Heart left ventricle (tissue), 16 donors: ENCODE measurements at regions of chr7 and their contacts with region 1.

Region 1: GRCh38 chr7:40329601-40330153 is 194.9 kb downstream of the SUGCT start:
- DNase-seq: no peak
- ATAC-seq: peak in 2 of 4 donors; percentile 49 to 50
- H3K4me3 ChIP-seq: no peak overlapping the region
- H3K27ac ChIP-seq: no peak overlapping the region
- H3K4me1 ChIP-seq: peaks cover 0 to 4% (median 0%) of the 10 kb centered on the region in 12 donors
- H3K27me3 ChIP-seq: no peaks in the 10 kb centered on the region
- CTCF ChIP-seq: peak; percentile 64 to 89 (median 73)
- POLR2A ChIP-seq: no peak

Region 2: GRCh38 chr7:40276061-40276460 is 53.6 kb before region 1 on chr7:
- intact Hi-C with region 1: no loop called
- DNase-seq: no peak
- ATAC-seq: no peak
- H3K4me3 ChIP-seq: no peak overlapping the region
- H3K27ac ChIP-seq: no peak overlapping the region
- H3K4me1 ChIP-seq: no peaks in the 10 kb centered on the region
- H3K27me3 ChIP-seq: no peaks in the 10 kb centered on the region
- CTCF ChIP-seq: no peak
- POLR2A ChIP-seq: no peak

Region 3: GRCh38 chr7:40489844-40490602 is 160.3 kb after region 1 on chr7:
- intact Hi-C with region 1: no loop called
- DNase-seq: no peak
- ATAC-seq: no peak
- H3K4me3 ChIP-seq: no peak overlapping the region
- H3K27ac ChIP-seq: no peak overlapping the region
- H3K4me1 ChIP-seq: no peaks in the 10 kb centered on the region
- H3K27me3 ChIP-seq: no peaks in the 10 kb centered on the region
- CTCF ChIP-seq: no peak
- POLR2A ChIP-seq: no peak

Region 4: GRCh38 chr7:40604601-40605438 is 275.1 kb after region 1 on chr7:
- intact Hi-C with region 1: loop called in 9 of 10 experiments (anchors 2 to 10 kb)
- DNase-seq: peak; percentile 19 to 75 (median 54)
- ATAC-seq: peak; percentile 58 to 88 (median 86)
- H3K4me3 ChIP-seq: no peak overlapping the region
- H3K27ac ChIP-seq: no peak overlapping the region
- H3K4me1 ChIP-seq: peaks cover 0 to 6% (median 0%) of the 10 kb centered on the region in 12 donors
- H3K27me3 ChIP-seq: no peaks in the 10 kb centered on the region
- CTCF ChIP-seq: peak; percentile 40 to 71 (median 57)
- POLR2A ChIP-seq: no peak

Region 5: DNA sequence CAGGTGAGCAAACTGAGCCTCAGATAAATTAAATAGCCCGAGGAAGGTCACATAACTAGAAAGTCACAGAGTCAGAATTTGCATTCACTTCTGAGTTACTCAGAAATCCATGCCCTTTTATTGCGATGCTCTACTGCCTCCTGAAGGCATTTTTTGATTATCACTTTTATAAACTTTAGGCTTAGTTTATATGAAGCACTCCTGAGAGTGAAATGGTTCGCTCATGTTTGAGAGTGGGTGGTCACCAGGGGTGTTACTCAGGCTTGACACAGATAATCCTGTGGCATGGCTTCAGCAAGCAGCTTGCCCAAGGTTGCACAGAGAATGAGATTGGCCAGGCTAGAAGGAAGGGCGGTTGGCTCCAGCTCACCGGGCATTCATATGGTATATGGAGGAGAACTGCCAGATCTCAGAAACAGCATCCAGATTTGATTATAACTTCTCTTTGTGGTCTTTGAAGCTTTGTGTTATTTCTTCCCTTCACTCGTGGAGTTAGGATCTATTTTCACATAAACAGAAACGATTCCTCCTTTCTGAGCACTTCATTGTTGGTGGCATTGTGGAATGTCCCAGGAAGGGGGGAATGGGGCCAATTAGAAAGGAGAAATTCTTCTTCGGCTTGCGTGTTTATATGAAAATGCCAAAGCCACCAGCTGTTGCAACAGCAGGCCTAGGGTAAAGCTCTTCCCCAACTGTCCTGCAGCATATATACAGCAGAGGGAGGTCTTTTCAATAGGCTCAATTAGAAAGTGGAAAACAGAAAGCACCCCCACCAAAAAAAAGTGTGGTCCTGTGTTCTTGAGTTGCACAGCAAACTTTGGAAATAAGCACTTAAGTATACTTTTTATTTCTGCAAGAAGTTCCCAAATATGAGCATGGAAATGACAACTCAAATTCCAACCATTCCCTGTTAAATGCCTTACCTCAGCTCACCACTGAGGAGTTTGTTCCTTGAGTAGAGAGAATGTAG is 433.9 kb after region 1 on chr7:
- intact Hi-C with region 1: loop called in 1 of 10 experiments (anchors 5 kb)
- DNase-seq: no peak
- ATAC-seq: no peak
- H3K4me3 ChIP-seq: no peak overlapping the region
- H3K27ac ChIP-seq: no peak overlapping the region
- H3K4me1 ChIP-seq: peaks cover 0 to 9% (median 0%) of the 10 kb centered on the region in 12 donors
- H3K27me3 ChIP-seq: no peaks in the 10 kb centered on the region
- CTCF ChIP-seq: peak in 3 of 12 donors; percentile 18 to 28 (median 24)
- POLR2A ChIP-seq: no peak

Region 6: GRCh38 chr7:41711283-41712064 is 1381.8 kb after region 1 on chr7:
- intact Hi-C with region 1: loop called in 9 of 10 experiments (anchors 5 to 10 kb)
- DNase-seq: no peak
- ATAC-seq: no peak
- H3K4me3 ChIP-seq: no peak overlapping the region
- H3K27ac ChIP-seq: no peak overlapping the region
- H3K4me1 ChIP-seq: peaks cover 0 to 2% (median 0%) of the 10 kb centered on the region in 12 donors
- H3K27me3 ChIP-seq: no peaks in the 10 kb centered on the region
- CTCF ChIP-seq: peak in 10 of 12 donors; percentile 5 to 50 (median 32)
- POLR2A ChIP-seq: no peak

Region 7: DNA sequence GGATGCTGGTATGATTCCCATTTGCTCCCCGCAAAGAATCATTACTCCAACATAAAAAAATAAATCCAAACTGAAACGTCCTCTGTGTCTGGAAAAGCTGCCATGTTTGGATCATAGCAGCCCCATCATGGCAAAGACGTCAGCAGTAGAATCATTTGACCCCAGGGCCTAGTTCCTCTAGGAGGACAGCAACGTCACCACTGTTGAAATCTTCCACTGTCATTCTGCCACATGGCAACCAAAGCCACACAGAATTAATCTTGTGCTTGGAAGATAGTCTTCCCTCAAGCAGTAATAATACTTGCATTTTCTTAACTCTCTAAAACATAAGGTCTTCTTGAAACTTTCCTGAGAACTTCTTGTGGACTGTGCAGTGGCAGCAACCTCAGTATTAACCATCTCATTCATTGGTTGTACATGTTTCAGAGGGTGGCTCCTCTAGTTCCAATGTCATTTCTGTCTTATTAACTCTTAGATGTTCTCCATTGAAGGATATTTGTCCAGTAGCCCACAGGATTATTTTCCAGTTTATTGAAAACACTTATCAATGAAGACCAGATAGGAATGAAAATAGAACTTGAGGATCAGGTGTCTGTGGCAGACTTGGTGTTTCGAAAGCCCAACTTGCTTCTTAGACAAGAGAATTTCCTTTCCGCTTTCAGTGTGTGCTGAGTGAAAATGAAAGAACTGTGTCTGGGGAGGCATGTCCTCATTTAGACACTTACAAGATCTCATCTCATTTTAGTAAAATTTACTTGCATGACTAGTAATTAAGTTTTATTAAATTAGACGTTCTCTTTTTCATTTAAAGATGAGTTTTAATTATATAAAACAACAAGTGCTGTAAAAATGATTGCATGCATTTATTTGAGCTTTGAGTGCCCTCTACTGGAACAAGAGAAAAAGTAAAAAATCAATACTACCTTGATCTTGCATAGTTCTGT is 1402.1 kb after region 1 on chr7:
- intact Hi-C with region 1: loop called in 1 of 10 experiments (anchors 5 kb)
- DNase-seq: no peak
- ATAC-seq: no peak
- H3K4me3 ChIP-seq: no peak overlapping the region
- H3K27ac ChIP-seq: no peak overlapping the region
- H3K4me1 ChIP-seq: peaks cover 0 to 9% (median 0%) of the 10 kb centered on the region in 12 donors
- H3K27me3 ChIP-seq: no peaks in the 10 kb centered on the region
- CTCF ChIP-seq: peak in 11 of 12 donors; percentile 10 to 57 (median 37)
- POLR2A ChIP-seq: no peak